Transverse colon (tissue), 4 donors: ENCODE measurements at regions of chr2 and their contacts with region 1.

Region 1: GRCh38 chr2:230842473-230842872 is 22.3 kb upstream of the ITM2C start:
- DNase-seq: peak; percentile 40
- H3K4me3 ChIP-seq: no peak overlapping the region
- H3K27ac ChIP-seq: peak overlapping the region; percentile 38 to 71 (median 55)
- H3K4me1 ChIP-seq: peaks cover 0 to 11% (median 0%) of the 10 kb centered on the region in 4 donors
- H3K27me3 ChIP-seq: no peaks in the 10 kb centered on the region
- CTCF ChIP-seq: no peak
- EP300 ChIP-seq: no peak
- POLR2A ChIP-seq: no peak

Region 2: DNA sequence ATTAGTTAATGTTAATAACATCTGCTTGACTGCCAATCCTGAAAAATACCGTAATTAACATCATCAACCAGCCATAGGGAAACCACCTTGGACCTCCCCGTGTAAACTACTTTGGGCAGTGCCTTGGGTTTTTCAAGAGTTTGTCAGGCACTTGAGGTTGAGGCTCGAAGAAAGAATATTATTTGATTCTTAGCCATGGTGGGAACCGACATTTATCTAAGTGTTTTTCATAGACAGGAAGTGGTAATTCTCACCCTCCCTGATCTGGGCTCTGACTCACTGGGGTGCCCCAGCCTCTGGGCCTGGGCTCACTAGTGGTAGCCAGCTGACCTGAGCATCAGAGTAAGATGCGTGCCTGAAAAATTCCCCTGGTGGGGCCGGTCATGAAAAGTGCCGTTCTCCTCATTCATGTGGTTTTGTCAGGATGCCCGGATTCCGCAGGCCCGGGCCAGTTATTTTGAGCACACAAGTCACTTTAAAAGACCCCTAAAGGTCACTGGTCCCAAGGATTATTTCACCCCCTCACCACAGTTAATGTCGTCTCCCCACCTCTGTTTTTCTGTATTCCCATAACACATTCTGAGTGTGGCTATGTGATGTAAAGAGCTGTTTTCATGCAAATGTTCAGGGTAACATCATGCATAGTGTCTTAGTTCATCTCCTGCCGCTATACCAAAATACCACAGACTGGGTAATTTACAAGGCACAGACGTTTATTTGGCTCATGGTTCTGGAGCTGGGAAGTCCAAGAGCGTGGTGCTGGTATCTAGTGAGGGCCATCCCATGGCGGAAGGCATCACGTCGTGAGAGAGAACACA is 131.8 kb after region 1 on chr2:
- in situ Hi-C with region 1: loop called in 1 of 4 experiments (anchors 5 kb)
- intact Hi-C with region 1: no loop called
- DNase-seq: peak; percentile 26
- H3K4me3 ChIP-seq: no peak overlapping the region
- H3K27ac ChIP-seq: no peak overlapping the region
- H3K4me1 ChIP-seq: no peaks in the 10 kb centered on the region
- H3K27me3 ChIP-seq: no peaks in the 10 kb centered on the region
- CTCF ChIP-seq: no peak
- EP300 ChIP-seq: no peak
- POLR2A ChIP-seq: no peak